GM12878 (cell line): ENCODE measurements at regions of chr12 and their contacts with region 1.

Region 1: DNA sequence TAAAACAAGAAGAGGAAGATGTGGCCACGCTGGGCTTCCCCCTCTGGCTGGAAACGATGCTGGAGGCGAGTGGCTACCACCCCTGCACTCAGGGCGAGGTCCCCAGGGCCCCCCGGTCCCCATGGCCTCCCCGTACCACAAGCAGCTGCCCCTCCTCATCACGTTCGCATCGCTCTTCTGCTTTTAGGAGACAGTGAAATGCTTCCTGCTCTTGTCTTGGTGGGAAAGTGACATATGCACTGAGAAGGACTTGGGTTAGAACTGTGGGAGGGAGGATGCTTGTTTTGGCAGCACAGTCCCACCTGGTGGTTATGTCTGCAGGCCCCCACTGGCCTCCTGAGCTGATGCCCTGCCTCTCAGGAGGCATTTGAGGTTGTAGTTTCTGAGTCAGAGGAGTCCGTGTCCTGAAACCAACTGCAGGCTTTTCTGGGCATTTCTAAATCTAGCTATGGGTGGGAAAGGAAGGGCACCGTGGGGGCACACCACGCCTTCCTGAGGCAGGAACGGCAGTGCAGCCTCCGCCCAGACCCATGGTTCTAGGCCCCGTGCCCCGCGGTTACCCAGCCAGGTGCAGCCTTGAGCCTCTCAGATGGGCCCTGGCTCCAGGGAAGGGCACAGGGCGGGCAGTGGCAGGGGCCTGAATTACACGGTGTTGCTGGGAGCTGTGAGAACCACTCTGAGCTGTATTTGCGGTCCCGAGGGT is 139.3 kb downstream of the ADGRD1 start:
- DNase-seq: peak; percentile 98
- ATAC-seq: peak; percentile 78
- H3K4me3 ChIP-seq: 0 out of 2 replicates have a peak overlapping the region, but pooled peaks have one; percentile 28
- H3K27ac ChIP-seq: peak overlapping the region; percentile 89
- H3K4me1 ChIP-seq: peaks cover 46% of the 10 kb centered on the region
- H3K27me3 ChIP-seq: no peaks in the 10 kb centered on the region
- CTCF ChIP-seq: peak; percentile 24 to 36 (median 27); a peak in 4 of 6 replicates
- EP300 ChIP-seq: peak; percentile 44 to 74; a peak in 2 of 4 replicates
- POLR2A ChIP-seq: no peak
- RAD21 ChIP-seq: peak; percentile 34; the same call in 1 of the 2 replicates

Region 2: GRCh38 chr12:130879212-130879686 is 213.8 kb before region 1 on chr12:
- CTCF ChIA-PET with region 1: interaction called, 6 read pairs
- POLR2A ChIA-PET with region 1: no interaction called
- RAD21 ChIA-PET with region 1: interaction called, 3 read pairs
- SMC1A ChIA-PET with region 1: interaction called, 4 read pairs
- in situ Hi-C with region 1: no loop called
- intact Hi-C with region 1: loop called (anchors 2 kb)
- DNase-seq: peak; percentile 69
- ATAC-seq: peak; percentile 83
- H3K4me3 ChIP-seq: peak overlapping the region; percentile 57; the same call in 1 of the 2 replicates
- H3K27ac ChIP-seq: peak overlapping the region; percentile 54
- H3K4me1 ChIP-seq: peaks cover 33% of the 10 kb centered on the region
- H3K27me3 ChIP-seq: no peaks in the 10 kb centered on the region
- CTCF ChIP-seq: no peak
- EP300 ChIP-seq: peak; percentile 50 to 68; a peak in 2 of 4 replicates
- POLR2A ChIP-seq: peak; percentile 75; the same call in 1 of the 2 replicates
- RAD21 ChIP-seq: no peak

Region 3: GRCh38 chr12:130916251-130916911 is 176.7 kb before region 1 on chr12:
- CTCF ChIA-PET with region 1: no interaction called
- POLR2A ChIA-PET with region 1: no interaction called
- RAD21 ChIA-PET with region 1: no interaction called
- SMC1A ChIA-PET with region 1: interaction called, 12 read pairs
- in situ Hi-C with region 1: no loop called
- intact Hi-C with region 1: no loop called
- DNase-seq: peak; percentile 21
- ATAC-seq: peak; percentile 75
- H3K4me3 ChIP-seq: no peak overlapping the region
- H3K27ac ChIP-seq: no peak overlapping the region
- H3K4me1 ChIP-seq: no peaks in the 10 kb centered on the region
- H3K27me3 ChIP-seq: no peaks in the 10 kb centered on the region; a peak in 1 of 4 replicates
- CTCF ChIP-seq: peak; percentile 82 to 91 (median 86)
- EP300 ChIP-seq: no peak
- POLR2A ChIP-seq: no peak
- RAD21 ChIP-seq: peak; percentile 98

Region 4: DNA sequence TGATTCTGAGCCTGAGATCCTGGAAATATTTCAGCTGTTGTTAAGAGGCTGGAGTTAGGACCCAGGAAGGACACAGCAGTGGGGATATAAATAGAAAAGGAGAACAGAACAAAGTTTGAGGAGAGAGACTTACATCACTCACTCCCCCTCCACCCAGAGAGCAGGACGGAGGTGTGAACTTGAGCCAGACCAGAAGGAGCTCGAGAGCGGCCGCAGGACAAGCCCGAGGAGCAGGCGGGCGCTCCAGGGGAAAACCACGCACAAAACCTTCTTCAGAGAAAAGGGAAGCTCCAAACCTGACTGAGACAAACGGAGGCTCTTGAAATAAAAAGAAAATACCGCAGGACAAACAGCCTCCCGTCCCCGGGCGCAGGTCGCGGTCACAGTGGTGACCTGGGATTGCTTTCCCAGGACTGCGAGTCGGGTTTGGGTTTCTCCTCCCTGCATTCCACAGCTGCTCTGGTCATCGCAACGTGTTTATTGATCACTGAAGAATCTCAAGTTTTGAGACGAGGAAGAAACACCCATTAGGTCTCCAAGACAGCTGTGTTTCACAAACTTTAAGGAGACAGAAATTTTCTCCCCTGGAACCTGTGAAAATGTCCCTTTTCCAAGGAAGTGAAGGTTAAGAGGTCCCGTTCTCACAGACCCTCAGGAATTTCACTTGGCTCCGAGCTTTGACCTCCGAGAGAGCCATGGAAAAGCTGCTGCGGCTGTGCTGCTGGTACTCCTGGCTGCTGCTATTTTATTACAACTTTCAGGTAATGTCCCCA is 139.1 kb before region 1 on chr12 and contains the start of gene ADGRD1:
- CTCF ChIA-PET with region 1: no interaction called
- POLR2A ChIA-PET with region 1: interaction called, 8 read pairs
- RAD21 ChIA-PET with region 1: interaction called, 16 read pairs
- SMC1A ChIA-PET with region 1: interaction called, 16 read pairs
- in situ Hi-C with region 1: no loop called
- intact Hi-C with region 1: no loop called
- DNase-seq: no peak
- ATAC-seq: peak; percentile 79
- H3K4me3 ChIP-seq: 0 out of 2 replicates have a peak within 1 kb of the TSS, but pooled peaks have one; percentile 18
- H3K27ac ChIP-seq: no peak within 1 kb of the TSS
- H3K4me1 ChIP-seq: peaks cover 4% of the 10 kb centered on the region; the same call in 1 of the 2 replicates
- H3K27me3 ChIP-seq: no peaks in the 10 kb centered on the region
- CTCF ChIP-seq: no peak
- EP300 ChIP-seq: no peak
- POLR2A ChIP-seq: no peak
- RAD21 ChIP-seq: no peak
- polyA plus RNA-seq, gene ADGRD1: 0.15 to 0.60 TPM

Region 5: GRCh38 chr12:130970165-130970907 is 122.7 kb before region 1 on chr12:
- CTCF ChIA-PET with region 1: interaction called, 3 read pairs
- POLR2A ChIA-PET with region 1: no interaction called
- RAD21 ChIA-PET with region 1: interaction called, 11 read pairs
- SMC1A ChIA-PET with region 1: interaction called, 6 read pairs
- in situ Hi-C with region 1: no loop called
- intact Hi-C with region 1: loop called (anchors 2 kb)
- DNase-seq: peak; percentile 68
- ATAC-seq: peak; percentile 94
- H3K4me3 ChIP-seq: 0 out of 2 replicates have a peak overlapping the region, but pooled peaks have one; percentile 35
- H3K27ac ChIP-seq: no peak overlapping the region
- H3K4me1 ChIP-seq: peaks cover 5% of the 10 kb centered on the region; the same call in 1 of the 2 replicates
- H3K27me3 ChIP-seq: no peaks in the 10 kb centered on the region
- CTCF ChIP-seq: no peak
- EP300 ChIP-seq: peak in 1 of 2 experiments; percentile 55; a peak in 1 of 4 replicates
- POLR2A ChIP-seq: no peak
- RAD21 ChIP-seq: no peak

Region 6: GRCh38 chr12:131068048-131068892 is 24.8 kb before region 1 on chr12:
- CTCF ChIA-PET with region 1: no interaction called
- POLR2A ChIA-PET with region 1: no interaction called
- RAD21 ChIA-PET with region 1: no interaction called
- SMC1A ChIA-PET with region 1: interaction called, 3 read pairs
- in situ Hi-C with region 1: no loop called
- intact Hi-C with region 1: loop called (anchors 2 kb)
- DNase-seq: no peak
- ATAC-seq: no peak
- H3K4me3 ChIP-seq: no peak overlapping the region
- H3K27ac ChIP-seq: no peak overlapping the region
- H3K4me1 ChIP-seq: no peaks in the 10 kb centered on the region; the same call in 1 of the 2 replicates
- H3K27me3 ChIP-seq: no peaks in the 10 kb centered on the region
- CTCF ChIP-seq: no peak
- EP300 ChIP-seq: no peak
- POLR2A ChIP-seq: no peak
- RAD21 ChIP-seq: no peak